Esophagus squamous epithelium (tissue), 5 donors: ENCODE measurements at regions of chr6 and their contacts with region 1.

Region 1: DNA sequence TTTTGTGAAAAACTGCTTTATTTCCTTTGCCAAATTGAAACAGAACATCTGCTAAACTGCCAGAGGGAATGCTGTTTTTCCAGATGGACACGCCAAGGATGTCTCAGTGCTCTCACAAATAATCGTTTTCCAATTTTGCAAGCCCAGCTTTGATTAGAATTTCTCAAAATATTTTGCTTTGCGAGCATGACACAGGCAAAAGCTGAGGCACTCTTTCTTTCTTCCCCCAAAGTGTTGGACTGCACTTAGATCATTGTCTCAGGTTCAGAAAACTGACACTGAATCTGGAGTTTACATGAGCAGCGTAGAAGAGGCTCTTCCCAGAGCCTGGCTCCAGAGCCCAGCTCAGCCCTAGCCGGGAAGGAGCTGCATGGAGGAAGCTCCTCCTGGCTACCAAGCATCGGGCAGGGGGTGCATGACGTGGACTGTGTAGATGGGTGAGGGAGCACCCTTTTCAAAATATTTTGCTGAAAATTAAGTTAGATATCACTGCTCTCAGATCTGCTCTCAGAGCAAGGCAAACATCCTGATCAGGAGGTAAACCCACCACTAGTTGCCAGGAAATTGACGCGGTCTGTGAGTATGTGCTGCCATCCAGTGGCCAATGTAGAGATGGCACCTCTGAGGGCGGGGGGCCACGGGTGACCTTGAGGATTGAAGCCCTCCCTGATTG is 107.5 kb downstream of the SLC22A3 start:
- DNase-seq: no peak
- H3K4me3 ChIP-seq: peak overlapping the region in 2 of 4 donors; percentile 20 to 49
- H3K27ac ChIP-seq: peak overlapping the region; percentile 2 to 77 (median 60)
- H3K4me1 ChIP-seq: peaks cover 0 to 18% (median 9%) of the 10 kb centered on the region in 3 donors
- H3K27me3 ChIP-seq: no peaks in the 10 kb centered on the region
- CTCF ChIP-seq: peak; percentile 79 to 98 (median 96)
- POLR2A ChIP-seq: no peak

Region 2: GRCh38 chr6:160121981-160122380 is 333.7 kb before region 1 on chr6:
- intact Hi-C with region 1: no loop called
- DNase-seq: no peak
- H3K4me3 ChIP-seq: no peak overlapping the region
- H3K27ac ChIP-seq: no peak overlapping the region
- H3K4me1 ChIP-seq: no peaks in the 10 kb centered on the region
- H3K27me3 ChIP-seq: no peaks in the 10 kb centered on the region
- CTCF ChIP-seq: no peak
- POLR2A ChIP-seq: no peak

Region 3: DNA sequence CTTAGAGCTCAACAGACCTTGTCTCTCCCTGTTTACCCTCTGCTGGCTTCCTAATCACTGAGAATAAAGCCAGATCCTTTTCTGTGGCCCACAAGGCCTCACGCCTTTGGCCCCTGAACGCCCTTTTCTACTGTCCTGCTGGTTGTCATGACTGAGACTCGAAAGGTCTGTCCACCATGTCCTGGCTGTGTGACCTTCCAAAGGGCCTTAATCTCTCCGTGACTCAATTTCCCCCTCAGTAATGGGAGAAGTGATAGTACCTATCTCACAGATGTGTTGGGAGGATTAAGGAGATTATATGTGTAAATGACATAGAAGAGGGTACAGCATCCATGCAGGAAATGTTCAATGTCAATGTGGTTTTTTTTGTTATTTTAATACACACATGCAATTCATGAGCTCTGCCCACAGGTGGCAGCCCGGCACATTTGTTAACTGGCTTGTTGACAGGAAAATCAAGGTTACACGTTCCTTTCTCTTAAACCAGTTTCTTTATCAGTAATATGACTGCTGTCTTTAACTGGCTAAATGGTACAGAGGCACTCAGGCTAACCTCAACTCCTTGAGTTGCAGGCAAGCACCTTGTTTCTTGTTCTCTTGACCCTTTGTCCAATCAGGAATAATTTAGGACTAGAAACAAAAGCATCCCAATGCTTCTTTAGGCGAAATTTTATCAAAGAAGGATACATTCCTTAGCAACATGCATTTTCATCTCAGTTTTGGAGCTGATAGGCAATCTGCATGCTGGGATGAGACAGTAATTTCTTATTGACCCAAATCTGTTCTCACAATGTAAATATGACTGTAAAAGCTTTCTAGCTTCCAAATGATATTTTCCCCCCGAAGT is 317.5 kb before region 1 on chr6:
- intact Hi-C with region 1: loop called (anchors 5 kb)
- DNase-seq: no peak
- H3K4me3 ChIP-seq: no peak overlapping the region
- H3K27ac ChIP-seq: peak overlapping the region in 1 of 4 donors; percentile 9
- H3K4me1 ChIP-seq: peaks cover 0 to 19% (median 5%) of the 10 kb centered on the region in 3 donors
- H3K27me3 ChIP-seq: no peaks in the 10 kb centered on the region
- CTCF ChIP-seq: peak; percentile 50 to 84 (median 71)
- POLR2A ChIP-seq: no peak

Region 4: DNA sequence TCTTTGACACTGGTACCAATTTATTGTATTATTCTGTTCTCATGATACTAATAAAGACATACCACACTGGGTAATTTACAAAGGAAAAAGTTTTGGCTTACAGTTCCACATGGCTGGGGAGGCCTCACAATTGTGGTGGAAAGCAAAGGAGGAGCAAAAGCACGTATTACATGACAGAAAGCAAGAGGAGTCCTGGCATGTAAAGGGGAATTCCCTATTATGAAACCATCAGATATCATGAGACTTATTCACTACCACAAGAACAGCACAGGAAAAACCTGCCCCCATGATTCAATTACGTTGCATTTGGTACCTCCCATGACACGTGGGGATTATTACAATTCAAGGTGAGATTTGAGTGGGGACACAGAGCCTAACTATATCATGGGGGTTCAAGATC is 240.4 kb before region 1 on chr6:
- intact Hi-C with region 1: loop called (anchors 5 kb)
- DNase-seq: no peak
- H3K4me3 ChIP-seq: no peak overlapping the region
- H3K27ac ChIP-seq: no peak overlapping the region
- H3K4me1 ChIP-seq: no peaks in the 10 kb centered on the region
- H3K27me3 ChIP-seq: no peaks in the 10 kb centered on the region
- CTCF ChIP-seq: no peak
- POLR2A ChIP-seq: no peak

Region 5: DNA sequence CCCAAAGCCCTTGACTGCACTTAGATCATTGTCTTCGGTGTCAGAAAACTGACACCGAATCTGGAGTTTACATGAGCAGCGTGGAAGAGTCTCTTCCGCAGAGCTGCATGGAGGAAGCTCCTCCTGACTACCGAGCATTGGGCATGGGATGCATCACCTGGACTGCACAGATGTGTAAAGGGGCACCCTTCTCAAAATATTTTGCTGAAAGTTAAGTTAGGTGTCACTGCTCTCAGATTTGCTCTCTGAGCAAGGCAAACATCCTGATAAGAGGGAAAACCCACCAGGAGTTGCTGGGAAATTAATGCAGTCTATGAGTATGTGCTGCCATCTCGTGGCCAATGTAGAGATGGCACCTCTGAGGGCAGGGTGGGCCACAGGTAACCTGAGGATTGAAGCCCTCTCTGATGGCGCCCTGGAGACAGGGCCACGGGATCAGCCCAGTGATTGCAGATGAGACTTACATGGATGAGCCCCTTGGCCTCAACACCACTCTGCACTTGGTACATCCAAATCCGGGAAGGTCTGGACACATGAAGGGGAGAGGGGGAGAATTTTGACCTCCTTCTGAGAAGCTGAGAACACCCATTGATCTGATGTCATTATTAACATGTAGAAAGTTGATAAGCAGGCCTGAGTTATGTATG is 78.5 kb after region 1 on chr6:
- intact Hi-C with region 1: loop called (anchors 2 kb)
- DNase-seq: no peak
- H3K4me3 ChIP-seq: peak overlapping the region in 1 of 4 donors; percentile 22
- H3K27ac ChIP-seq: no peak overlapping the region
- H3K4me1 ChIP-seq: peaks cover 0 to 7% (median 2%) of the 10 kb centered on the region in 3 donors
- H3K27me3 ChIP-seq: peaks cover 0 to 6% (median 0%) of the 10 kb centered on the region in 4 donors
- CTCF ChIP-seq: peak; percentile 63 to 92 (median 82)
- POLR2A ChIP-seq: no peak